ENCODE measurements at regions of chr11 and their contacts with region 1.

Region 1: GRCh38 chr11:67572747-67573419 is 10.7 kb upstream of the GSTP1 start:
- DNase-seq: peak; percentile 76
- H3K4me3 Mint-ChIP-seq: no peak overlapping the region
- H3K27ac Mint-ChIP-seq: no peak overlapping the region
- H3K4me1 Mint-ChIP-seq: no peaks in the 10 kb centered on the region
- H3K27me3 Mint-ChIP-seq: peaks cover 15% of the 10 kb centered on the region

Region 2: DNA sequence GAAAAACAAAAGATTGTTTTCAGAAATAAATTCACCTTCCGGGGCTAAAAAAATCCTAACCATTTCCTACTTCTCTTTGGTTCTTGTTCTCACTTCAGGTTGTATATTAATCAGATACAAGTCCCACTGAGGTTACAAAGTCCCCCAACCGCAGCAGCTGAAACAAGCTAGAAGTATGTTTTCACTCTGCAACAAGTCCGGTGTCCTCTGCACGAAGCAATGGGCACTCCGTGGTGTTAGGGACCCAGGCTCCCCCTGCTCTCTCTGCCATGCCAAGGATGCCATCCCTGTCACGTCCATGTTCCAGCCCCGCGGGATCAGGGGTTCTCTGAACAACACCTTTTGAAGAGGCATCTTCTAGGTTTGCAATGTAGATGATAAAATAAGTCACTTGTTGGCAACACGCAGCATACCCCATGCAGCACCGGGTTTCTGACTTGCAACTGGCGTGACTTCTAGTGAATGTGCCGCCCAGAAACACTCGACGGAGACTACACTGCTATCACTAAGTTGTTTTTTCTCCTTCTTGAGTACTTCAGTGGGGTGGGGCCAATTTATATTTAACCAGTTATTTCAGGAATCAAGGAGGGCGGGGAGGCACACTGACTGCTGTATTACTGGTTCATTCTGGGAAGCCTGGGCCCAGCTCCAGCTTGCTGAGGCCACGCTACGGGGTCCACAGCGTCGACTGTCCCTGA is 14.7 kb before region 1 on chr11:
- intact Hi-C with region 1: no loop called
- DNase-seq: no peak
- H3K4me3 Mint-ChIP-seq: no peak overlapping the region
- H3K27ac Mint-ChIP-seq: no peak overlapping the region
- H3K4me1 Mint-ChIP-seq: peaks cover 7% of the 10 kb centered on the region
- H3K27me3 Mint-ChIP-seq: peaks cover 6% of the 10 kb centered on the region

Region 3: DNA sequence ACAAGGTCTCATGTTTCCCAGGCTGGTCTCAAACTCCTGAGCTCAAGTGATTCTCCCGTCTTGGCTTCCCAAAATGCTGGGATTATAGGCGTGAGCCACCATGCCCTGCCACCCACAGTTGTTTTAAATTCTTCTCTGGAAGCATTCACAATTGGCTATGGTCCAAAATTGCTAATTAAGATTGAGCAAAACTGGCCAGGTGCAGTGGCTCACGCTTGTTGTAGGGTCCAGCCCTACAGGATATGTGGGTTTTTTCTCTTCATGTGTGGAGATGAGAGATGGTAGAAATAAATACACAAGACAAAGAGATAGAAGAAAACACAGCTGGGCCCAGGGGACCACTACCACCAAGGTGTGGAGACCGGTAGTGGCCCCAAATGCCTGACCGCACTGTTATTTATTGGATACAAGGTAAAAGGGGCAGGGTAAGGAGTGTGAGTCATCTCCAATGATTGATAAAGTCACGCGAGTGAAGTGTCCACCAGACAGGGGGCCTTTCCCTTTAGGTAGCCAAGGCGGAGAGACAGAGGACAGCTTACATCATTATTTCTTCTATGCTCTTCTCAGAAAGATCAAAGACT is 85.9 kb after region 1 on chr11:
- intact Hi-C with region 1: loop called (anchors 1 kb)
- DNase-seq: no peak
- H3K4me3 Mint-ChIP-seq: no peak overlapping the region
- H3K27ac Mint-ChIP-seq: no peak overlapping the region
- H3K4me1 Mint-ChIP-seq: no peaks in the 10 kb centered on the region
- H3K27me3 Mint-ChIP-seq: no peaks in the 10 kb centered on the region

Measured in activated CD4-positive, alpha-beta T cell treated with anti-CD3 and anti-CD28 coated beads, Interleukin-2, amount 10 ng/mL, durations not matched to agents 24 days and 14 days (primary cell).